Activated naive CD4-positive, alpha-beta T cell treated with anti-CD3 and anti-CD28 coated beads for 36 hours (primary cell): ENCODE measurements at regions of chr1 and their contacts with region 1.

Region 1: GRCh38 chr1:189429610-189430009 is 1048.1 kb downstream of the BRINP3 start:
- DNase-seq: no peak
- H3K4me3 Mint-ChIP-seq: no peak overlapping the region
- H3K27ac Mint-ChIP-seq: no peak overlapping the region
- H3K4me1 Mint-ChIP-seq: no peaks in the 10 kb centered on the region
- H3K27me3 Mint-ChIP-seq: no peaks in the 10 kb centered on the region

Region 2: GRCh38 chr1:190436615-190437014 is 1007.0 kb after region 1 on chr1:
- CTCF ChIA-PET with region 1: no interaction called
- intact Hi-C with region 1: loop called (anchors 5 kb)
- DNase-seq: no peak
- H3K4me3 Mint-ChIP-seq: no peak overlapping the region
- H3K27ac Mint-ChIP-seq: no peak overlapping the region
- H3K4me1 Mint-ChIP-seq: no peaks in the 10 kb centered on the region
- H3K27me3 Mint-ChIP-seq: no peaks in the 10 kb centered on the region